ENCODE measurements at regions of chr6 and their contacts with region 1.

Region 1: GRCh38 chr6:107847844-107848802 is 24.0 kb upstream of the SCML4 start:
- DNase-seq: peak; percentile 85
- ATAC-seq: peak; percentile 90
- H3K4me3 ChIP-seq: peak overlapping the region; percentile 3 to 65 (median 56)
- H3K4me3 Mint-ChIP-seq: peak overlapping the region; percentile 85
- H3K27ac ChIP-seq: peak overlapping the region in 1 of 2 donors; percentile 34
- H3K27ac Mint-ChIP-seq: no peak overlapping the region
- H3K4me1 ChIP-seq: peaks cover 9 to 13% of the 10 kb centered on the region in 2 donors
- H3K4me1 Mint-ChIP-seq: peaks cover 15% of the 10 kb centered on the region
- H3K27me3 ChIP-seq: peaks cover 0 to 9% (median 2%) of the 10 kb centered on the region in 4 experiments
- H3K27me3 Mint-ChIP-seq: peaks cover 7% of the 10 kb centered on the region
- CTCF ChIP-seq: peak; percentile 96

Region 2: DNA sequence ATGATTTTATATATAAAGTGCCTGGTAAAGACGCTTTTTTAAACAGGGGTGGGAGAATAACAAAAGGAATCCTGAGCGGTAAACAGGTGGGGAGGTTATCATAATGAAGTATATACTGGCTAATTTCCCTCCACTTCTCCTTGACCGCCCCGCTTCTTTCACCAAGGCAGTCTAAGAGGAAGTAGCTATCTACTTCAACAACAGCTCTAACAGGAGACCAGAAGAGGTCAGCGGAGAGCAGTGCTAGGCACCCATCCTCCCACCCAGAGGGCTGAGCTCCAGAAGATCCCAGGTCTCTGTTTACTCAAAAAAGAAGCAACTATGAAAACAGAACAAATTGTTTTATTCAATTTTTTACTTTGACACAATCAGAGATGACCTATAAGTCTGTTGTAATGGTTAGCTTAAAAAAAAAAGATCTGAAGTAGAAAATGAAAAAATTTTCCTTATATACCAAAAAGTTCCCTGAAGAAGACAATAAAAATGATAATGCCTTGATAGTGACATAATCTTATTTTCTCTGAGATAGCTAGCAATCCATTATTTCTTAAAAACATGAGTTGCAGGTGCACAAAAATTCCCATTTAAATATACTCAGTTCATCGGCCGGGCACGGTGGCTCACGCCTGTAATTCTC is 529.9 kb before region 1 on chr6:
- CTCF ChIA-PET with region 1: interaction called, 36 read pairs
- POLR2A ChIA-PET with region 1: no interaction called
- intact Hi-C with region 1: loop called (anchors 1 kb)
- DNase-seq: peak; percentile 61
- ATAC-seq: peak; percentile 80
- H3K4me3 ChIP-seq: no peak overlapping the region
- H3K4me3 Mint-ChIP-seq: no peak overlapping the region
- H3K27ac ChIP-seq: no peak overlapping the region
- H3K27ac Mint-ChIP-seq: no peak overlapping the region
- H3K4me1 ChIP-seq: peaks cover 9 to 10% of the 10 kb centered on the region in 2 donors
- H3K4me1 Mint-ChIP-seq: peaks cover 16% of the 10 kb centered on the region
- H3K27me3 ChIP-seq: no peaks in the 10 kb centered on the region
- H3K27me3 Mint-ChIP-seq: no peaks in the 10 kb centered on the region
- CTCF ChIP-seq: peak; percentile 53

Region 3: DNA sequence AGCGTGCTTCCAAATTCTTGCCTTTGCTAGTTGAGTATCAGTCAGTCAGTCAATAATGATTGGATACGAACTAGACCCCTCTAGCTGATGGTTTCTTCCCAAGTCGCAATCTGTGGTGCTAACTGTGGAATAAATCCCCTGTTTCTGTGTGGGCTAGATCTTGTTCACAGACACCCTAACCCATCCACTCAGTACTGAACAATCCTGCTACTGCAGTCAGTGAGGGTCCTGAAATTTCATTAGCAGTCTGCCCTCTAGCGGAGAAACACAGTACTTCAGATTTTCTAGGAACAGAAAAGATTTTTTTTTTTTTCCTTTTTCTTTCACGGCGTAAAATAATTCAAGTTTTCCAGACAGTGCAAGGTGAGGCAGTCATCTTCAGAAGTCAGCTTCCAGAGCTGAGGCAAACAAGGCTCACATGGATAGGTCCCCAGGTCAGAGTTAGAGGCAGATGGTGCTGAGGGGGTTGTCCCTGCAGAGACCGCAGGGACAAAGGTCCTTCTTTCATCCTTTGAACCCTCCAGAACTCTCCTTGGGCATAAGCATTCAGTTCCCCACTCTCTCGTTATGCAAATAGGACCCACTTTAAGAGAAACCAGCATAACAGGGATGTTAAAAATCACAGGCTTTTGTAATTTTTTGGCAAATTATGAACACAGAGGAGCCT is 143.6 kb before region 1 on chr6:
- CTCF ChIA-PET with region 1: interaction called, 50 read pairs
- POLR2A ChIA-PET with region 1: no interaction called
- intact Hi-C with region 1: loop called (anchors 1 kb)
- DNase-seq: peak; percentile 67
- ATAC-seq: peak; percentile 53
- H3K4me3 ChIP-seq: no peak overlapping the region
- H3K4me3 Mint-ChIP-seq: no peak overlapping the region
- H3K27ac ChIP-seq: no peak overlapping the region
- H3K27ac Mint-ChIP-seq: no peak overlapping the region
- H3K4me1 ChIP-seq: peaks cover 0 to 5% of the 10 kb centered on the region in 2 donors
- H3K4me1 Mint-ChIP-seq: peaks cover 2% of the 10 kb centered on the region
- H3K27me3 ChIP-seq: no peaks in the 10 kb centered on the region
- H3K27me3 Mint-ChIP-seq: no peaks in the 10 kb centered on the region
- CTCF ChIP-seq: peak; percentile 85

Region 4: DNA sequence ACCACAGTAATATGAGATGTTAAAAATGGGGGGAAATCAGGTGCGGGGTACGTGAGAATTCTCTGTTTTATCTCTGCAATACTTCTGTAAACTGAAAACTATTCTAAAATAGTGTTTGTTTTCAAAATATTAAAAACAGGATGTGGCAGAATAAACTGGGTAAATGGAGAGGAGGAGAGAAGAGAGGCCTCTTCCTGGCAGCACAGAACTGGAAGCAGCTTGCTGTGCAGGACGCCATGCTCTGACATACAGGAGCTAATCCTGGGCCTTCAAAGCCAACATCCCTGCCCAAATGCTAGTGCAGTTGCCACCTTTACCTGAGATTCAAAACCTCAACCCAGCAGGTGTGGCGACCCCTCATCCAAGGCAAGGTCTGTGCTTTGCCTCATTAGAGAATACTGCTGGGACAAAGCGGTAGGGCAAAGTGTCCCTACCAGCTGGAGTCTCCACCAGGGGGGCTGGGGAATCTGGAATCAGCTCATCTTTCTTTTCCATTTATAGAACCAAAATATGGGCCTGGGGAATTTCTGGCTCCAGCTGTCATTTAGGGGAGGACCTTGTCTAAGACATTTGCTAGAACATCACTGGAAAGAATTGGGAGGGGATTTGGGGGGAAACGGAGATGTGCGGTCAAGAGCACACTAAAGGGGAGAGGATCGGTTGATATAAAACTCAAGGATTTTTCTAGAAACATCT is 91.3 kb before region 1 on chr6:
- CTCF ChIA-PET with region 1: interaction called, 13 read pairs
- POLR2A ChIA-PET with region 1: no interaction called
- intact Hi-C with region 1: no loop called
- DNase-seq: no peak
- ATAC-seq: no peak
- H3K4me3 ChIP-seq: no peak overlapping the region
- H3K4me3 Mint-ChIP-seq: no peak overlapping the region
- H3K27ac ChIP-seq: no peak overlapping the region
- H3K27ac Mint-ChIP-seq: no peak overlapping the region
- H3K4me1 ChIP-seq: no peaks in the 10 kb centered on the region
- H3K4me1 Mint-ChIP-seq: peaks cover 6% of the 10 kb centered on the region
- H3K27me3 ChIP-seq: no peaks in the 10 kb centered on the region
- H3K27me3 Mint-ChIP-seq: no peaks in the 10 kb centered on the region
- CTCF ChIP-seq: no peak

Region 5: DNA sequence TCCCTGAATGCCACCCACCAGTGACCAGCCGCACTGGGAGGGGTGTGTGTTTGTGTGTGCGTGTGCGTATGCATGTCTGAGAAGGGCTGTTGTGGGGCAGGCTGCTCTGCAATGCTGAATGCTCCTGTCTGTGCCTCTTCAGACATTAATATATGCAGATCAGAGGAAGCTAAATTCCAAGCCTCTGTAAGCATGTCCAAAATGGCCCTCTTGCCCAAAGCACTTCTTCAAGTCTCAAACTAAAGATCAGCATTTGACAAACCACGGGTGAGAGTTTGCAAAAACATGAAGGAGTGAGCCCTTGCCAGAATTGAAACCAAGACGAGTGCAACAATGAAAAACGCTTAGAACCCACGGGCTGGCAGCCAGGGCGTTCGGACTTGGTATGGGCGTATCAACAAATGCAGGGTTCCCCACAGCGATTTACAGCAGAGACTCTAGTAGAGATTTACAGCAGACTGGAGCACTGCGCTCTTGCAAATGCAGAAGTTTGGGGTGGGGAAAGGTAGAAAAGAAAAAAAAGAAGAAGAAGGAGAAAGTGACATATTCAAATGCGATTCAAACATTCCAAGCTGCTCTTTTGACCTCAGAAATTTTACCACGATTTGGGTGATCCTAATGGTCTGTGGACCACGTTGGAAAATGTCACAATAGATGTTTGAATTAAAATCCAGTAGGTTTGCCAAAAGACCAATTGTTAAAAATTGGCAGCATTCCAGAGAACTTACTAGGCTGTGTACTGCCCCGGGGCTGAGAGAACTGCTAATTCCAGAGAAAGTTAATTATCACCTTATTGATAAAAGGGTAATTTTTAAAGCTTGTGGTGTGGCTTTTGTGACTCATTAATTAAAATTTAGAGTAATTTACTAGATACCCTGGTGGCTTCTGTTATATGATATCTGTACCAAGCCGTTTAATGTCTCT is 27.5 kb before region 1 on chr6:
- CTCF ChIA-PET with region 1: interaction called, 40 read pairs
- POLR2A ChIA-PET with region 1: interaction called, 3 read pairs
- intact Hi-C with region 1: no loop called
- DNase-seq: peak; percentile 69
- ATAC-seq: no peak
- H3K4me3 ChIP-seq: peak overlapping the region in 4 of 5 experiments; percentile 7 to 43 (median 29)
- H3K4me3 Mint-ChIP-seq: peak overlapping the region; percentile 68
- H3K27ac ChIP-seq: peak overlapping the region; percentile 31 to 95
- H3K27ac Mint-ChIP-seq: peak overlapping the region; percentile 70
- H3K4me1 ChIP-seq: peaks cover 51 to 64% of the 10 kb centered on the region in 2 donors
- H3K4me1 Mint-ChIP-seq: peaks cover 71% of the 10 kb centered on the region
- H3K27me3 ChIP-seq: no peaks in the 10 kb centered on the region
- H3K27me3 Mint-ChIP-seq: no peaks in the 10 kb centered on the region
- CTCF ChIP-seq: no peak

Region 6: DNA sequence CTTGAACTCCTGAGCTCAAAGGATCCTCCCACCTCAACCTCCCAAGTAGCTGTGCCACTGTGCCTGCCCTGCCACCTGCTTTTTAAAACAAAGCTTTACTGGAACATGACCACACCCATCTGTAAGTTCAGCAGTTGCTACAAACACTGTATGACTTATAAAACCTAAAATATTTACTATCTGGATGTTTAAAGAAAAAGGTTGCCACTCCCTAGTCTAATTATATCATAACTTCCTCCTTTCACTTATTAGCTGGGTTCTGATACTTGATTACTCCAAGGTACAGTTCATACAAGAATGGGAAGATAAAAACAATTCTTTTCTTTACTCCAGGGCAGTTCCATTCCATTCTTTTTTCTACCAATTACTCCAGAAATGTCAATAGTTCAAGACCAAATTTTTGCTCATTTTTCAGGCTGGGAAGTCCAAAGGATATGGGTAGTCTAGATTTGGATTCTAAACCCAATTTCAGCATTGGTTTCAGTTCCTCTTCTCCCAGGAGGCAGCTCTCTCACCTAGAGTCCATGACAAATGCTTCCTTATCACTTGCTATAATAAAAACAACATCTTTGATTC is 46.8 kb after region 1 on chr6:
- CTCF ChIA-PET with region 1: interaction called, 12 read pairs
- POLR2A ChIA-PET with region 1: no interaction called
- intact Hi-C with region 1: no loop called
- DNase-seq: peak; percentile 77
- ATAC-seq: peak; percentile 80
- H3K4me3 ChIP-seq: peak overlapping the region in 1 of 5 experiments; percentile 27
- H3K4me3 Mint-ChIP-seq: peak overlapping the region; percentile 48
- H3K27ac ChIP-seq: peak overlapping the region; percentile 75 to 76
- H3K27ac Mint-ChIP-seq: peak overlapping the region; percentile 96
- H3K4me1 ChIP-seq: peaks cover 49 to 53% of the 10 kb centered on the region in 2 donors
- H3K4me1 Mint-ChIP-seq: peaks cover 55% of the 10 kb centered on the region
- H3K27me3 ChIP-seq: no peaks in the 10 kb centered on the region
- H3K27me3 Mint-ChIP-seq: no peaks in the 10 kb centered on the region
- CTCF ChIP-seq: no peak